ENCODE measurements at regions of chr2 and their contacts with region 1.

Region 1: DNA sequence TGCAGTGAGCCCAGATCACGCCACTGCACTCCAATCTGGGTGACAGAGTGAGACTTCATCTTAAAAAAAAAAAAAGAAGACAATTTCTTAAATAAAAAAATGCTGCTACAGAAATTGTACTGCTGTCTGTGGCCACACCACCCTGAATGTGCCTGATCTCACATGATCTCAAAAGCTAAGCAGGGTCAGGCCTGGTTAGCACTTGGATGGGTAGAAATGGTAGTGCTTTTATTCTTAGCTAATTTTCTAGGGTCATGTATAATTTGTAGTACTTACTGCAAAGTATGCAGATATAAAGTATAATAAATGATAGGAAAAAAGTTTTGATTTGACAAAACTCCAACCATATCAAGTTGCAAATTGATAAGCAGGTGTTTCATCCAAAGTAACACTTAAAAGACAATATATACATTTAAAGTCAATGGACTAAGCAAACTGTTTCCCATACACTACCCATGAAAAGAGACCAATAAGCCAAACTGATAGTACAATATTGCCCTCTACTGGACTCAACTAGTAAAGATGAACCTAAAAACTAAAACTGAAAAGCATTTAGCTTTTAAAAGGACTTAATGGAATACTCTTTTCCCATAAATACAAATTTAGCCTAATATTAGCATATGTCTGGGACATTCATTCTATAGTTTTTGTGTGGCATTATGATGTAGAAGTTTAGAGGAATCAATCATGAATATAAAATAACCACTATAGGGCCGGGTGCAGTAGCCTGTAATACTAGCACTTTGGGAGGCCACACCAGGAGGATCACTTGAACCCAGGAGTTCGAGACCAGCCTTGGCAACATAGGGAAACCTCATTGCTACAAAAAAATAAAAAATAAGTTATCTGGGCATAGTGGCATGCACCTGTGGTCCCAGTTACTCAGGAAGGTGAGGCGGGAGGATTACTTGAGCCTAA is 18.6 kb upstream of the PEX13 start:
- DNase-seq: peak in 3 of 9 experiments; percentile 40 to 77 (median 70)
- ATAC-seq: peak; percentile 91
- H3K4me3 ChIP-seq: no peak overlapping the region
- H3K4me3 Mint-ChIP-seq: no peak overlapping the region
- H3K27ac ChIP-seq: no peak overlapping the region
- H3K27ac Mint-ChIP-seq: no peak overlapping the region
- H3K4me1 ChIP-seq: no peaks in the 10 kb centered on the region
- H3K4me1 Mint-ChIP-seq: no peaks in the 10 kb centered on the region
- H3K27me3 ChIP-seq: no peaks in the 10 kb centered on the region
- H3K27me3 Mint-ChIP-seq: no peaks in the 10 kb centered on the region
- CTCF ChIP-seq: peak; percentile 87

Region 2: GRCh38 chr2:60707750-60708371 is 291.0 kb before region 1 on chr2:
- CTCF ChIA-PET with region 1: interaction called, 131 read pairs
- POLR2A ChIA-PET with region 1: no interaction called
- intact Hi-C with region 1: loop called (anchors 1 kb)
- DNase-seq: peak in 2 of 9 experiments; percentile 47 to 64
- ATAC-seq: peak; percentile 58
- H3K4me3 ChIP-seq: no peak overlapping the region
- H3K4me3 Mint-ChIP-seq: no peak overlapping the region
- H3K27ac ChIP-seq: no peak overlapping the region
- H3K27ac Mint-ChIP-seq: no peak overlapping the region
- H3K4me1 ChIP-seq: no peaks in the 10 kb centered on the region
- H3K4me1 Mint-ChIP-seq: no peaks in the 10 kb centered on the region
- H3K27me3 ChIP-seq: no peaks in the 10 kb centered on the region
- H3K27me3 Mint-ChIP-seq: peaks cover 4% of the 10 kb centered on the region
- CTCF ChIP-seq: peak; percentile 83

Region 3: GRCh38 chr2:60806988-60807681 is 191.8 kb before region 1 on chr2:
- CTCF ChIA-PET with region 1: interaction called, 124 read pairs
- POLR2A ChIA-PET with region 1: no interaction called
- intact Hi-C with region 1: loop called (anchors 1 kb)
- DNase-seq: peak in 6 of 9 experiments; percentile 23 to 80 (median 52)
- ATAC-seq: peak; percentile 75
- H3K4me3 ChIP-seq: no peak overlapping the region
- H3K4me3 Mint-ChIP-seq: peak overlapping the region; percentile 40
- H3K27ac ChIP-seq: peak overlapping the region; percentile 31 to 57
- H3K27ac Mint-ChIP-seq: peak overlapping the region; percentile 90
- H3K4me1 ChIP-seq: peaks cover 24% of the 10 kb centered on the region
- H3K4me1 Mint-ChIP-seq: peaks cover 41% of the 10 kb centered on the region
- H3K27me3 ChIP-seq: no peaks in the 10 kb centered on the region
- H3K27me3 Mint-ChIP-seq: no peaks in the 10 kb centered on the region
- CTCF ChIP-seq: no peak

Region 4: GRCh38 chr2:60899230-60899891 is 99.5 kb before region 1 on chr2:
- CTCF ChIA-PET with region 1: interaction called, 3 read pairs
- POLR2A ChIA-PET with region 1: no interaction called
- intact Hi-C with region 1: loop called in 1 of 2 experiments (anchors 5 kb)
- DNase-seq: peak in 2 of 9 experiments; percentile 24 to 59
- ATAC-seq: peak; percentile 31
- H3K4me3 ChIP-seq: no peak overlapping the region
- H3K4me3 Mint-ChIP-seq: no peak overlapping the region
- H3K27ac ChIP-seq: peak overlapping the region in 1 of 2 experiments; percentile 2
- H3K27ac Mint-ChIP-seq: no peak overlapping the region
- H3K4me1 ChIP-seq: peaks cover 7% of the 10 kb centered on the region
- H3K4me1 Mint-ChIP-seq: peaks cover 18% of the 10 kb centered on the region
- H3K27me3 ChIP-seq: no peaks in the 10 kb centered on the region
- H3K27me3 Mint-ChIP-seq: no peaks in the 10 kb centered on the region
- CTCF ChIP-seq: no peak

Region 5: GRCh38 chr2:60926737-60927552 is 71.9 kb before region 1 on chr2:
- CTCF ChIA-PET with region 1: no interaction called
- POLR2A ChIA-PET with region 1: no interaction called
- intact Hi-C with region 1: loop called in 1 of 2 experiments (anchors 5 kb)
- DNase-seq: peak in 1 of 9 experiments; percentile 36
- ATAC-seq: no peak
- H3K4me3 ChIP-seq: no peak overlapping the region
- H3K4me3 Mint-ChIP-seq: no peak overlapping the region
- H3K27ac ChIP-seq: no peak overlapping the region
- H3K27ac Mint-ChIP-seq: peak overlapping the region; percentile 10
- H3K4me1 ChIP-seq: no peaks in the 10 kb centered on the region
- H3K4me1 Mint-ChIP-seq: no peaks in the 10 kb centered on the region
- H3K27me3 ChIP-seq: no peaks in the 10 kb centered on the region
- H3K27me3 Mint-ChIP-seq: no peaks in the 10 kb centered on the region
- CTCF ChIP-seq: no peak

Measured in CD8-positive, alpha-beta T cell (primary cell).